Heart left ventricle (tissue), 16 donors: ENCODE measurements at regions of chr14 and their contacts with region 1.

Region 1: DNA sequence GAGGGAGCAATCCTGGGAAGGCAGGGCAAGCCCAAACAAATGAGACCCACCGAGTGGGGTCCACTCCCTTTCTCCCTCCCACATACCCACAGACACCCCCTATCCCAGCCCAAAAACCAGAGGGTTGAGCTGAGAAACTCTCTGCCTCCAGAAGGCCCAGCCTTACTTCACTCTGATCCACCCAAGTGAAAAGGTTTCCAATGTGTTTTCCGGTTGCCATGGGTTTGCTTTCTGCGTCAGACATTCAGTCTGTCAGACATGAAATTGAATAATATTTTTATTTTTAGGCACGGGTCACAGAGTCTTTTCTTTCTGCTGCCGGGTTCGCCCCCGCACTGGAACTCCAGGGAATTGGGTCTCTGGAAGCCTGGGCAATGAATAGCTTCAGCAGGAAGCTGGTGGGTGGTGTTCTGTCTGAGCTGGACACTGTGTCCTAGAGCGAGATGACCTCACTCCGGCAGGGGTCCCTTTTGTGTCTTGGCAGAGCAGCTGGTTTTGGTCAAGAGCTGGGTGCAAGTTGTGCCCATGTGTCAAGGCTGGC is 69.8 kb upstream of the CLMN start:
- DNase-seq: peak; percentile 84 to 97 (median 91)
- ATAC-seq: peak; percentile 92 to 97 (median 96)
- H3K4me3 ChIP-seq: no peak overlapping the region
- H3K27ac ChIP-seq: peak overlapping the region; percentile 72 to 98 (median 86)
- H3K4me1 ChIP-seq: peaks cover 0 to 28% (median 13%) of the 10 kb centered on the region in 12 donors
- H3K27me3 ChIP-seq: no peaks in the 10 kb centered on the region
- CTCF ChIP-seq: no peak
- POLR2A ChIP-seq: peak in 1 of 2 donors; percentile 35

Region 2: DNA sequence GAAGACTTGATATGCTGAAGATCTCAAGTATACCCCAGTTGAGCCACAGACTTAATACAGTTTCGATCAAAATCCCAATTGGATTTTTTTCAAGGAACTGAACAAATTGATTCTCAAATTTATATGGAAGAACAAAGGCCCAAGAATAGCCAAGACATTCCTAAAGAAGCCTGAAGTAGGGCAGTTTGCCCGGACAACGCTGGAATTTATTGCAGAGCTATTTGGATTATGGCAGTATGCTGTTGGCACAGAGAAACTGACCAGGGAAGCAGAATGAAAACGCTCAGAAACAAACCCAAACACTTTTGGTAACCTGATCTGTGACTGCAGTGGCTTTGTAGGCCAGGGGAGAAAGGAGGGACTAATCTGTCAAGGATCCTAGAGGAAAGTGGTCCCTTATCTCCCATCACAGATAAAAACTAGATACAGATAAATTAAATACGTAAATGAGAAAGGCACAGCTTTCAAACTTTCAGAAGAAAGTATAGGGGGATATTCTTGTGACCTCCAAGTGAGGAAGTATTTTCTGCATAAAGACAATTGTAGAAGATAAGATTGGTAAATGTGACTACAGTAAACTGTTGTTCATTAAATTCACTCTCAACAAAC is 583.8 kb before region 1 on chr14:
- intact Hi-C with region 1: loop called in 1 of 10 experiments (anchors 10 kb)
- DNase-seq: no peak
- ATAC-seq: no peak
- H3K4me3 ChIP-seq: no peak overlapping the region
- H3K27ac ChIP-seq: peak overlapping the region in 1 of 12 donors; percentile 38
- H3K4me1 ChIP-seq: no peaks in the 10 kb centered on the region
- H3K27me3 ChIP-seq: peaks cover 0 to 25% (median 0%) of the 10 kb centered on the region in 9 donors
- CTCF ChIP-seq: no peak
- POLR2A ChIP-seq: no peak

Region 3: GRCh38 chr14:95413289-95414215 is 24.0 kb after region 1 on chr14:
- intact Hi-C with region 1: no loop called
- DNase-seq: no peak
- ATAC-seq: no peak
- H3K4me3 ChIP-seq: no peak overlapping the region
- H3K27ac ChIP-seq: no peak overlapping the region
- H3K4me1 ChIP-seq: peaks cover 6 to 30% (median 16%) of the 10 kb centered on the region in 12 donors
- H3K27me3 ChIP-seq: no peaks in the 10 kb centered on the region
- CTCF ChIP-seq: no peak
- POLR2A ChIP-seq: no peak